ENCODE measurements at regions of chr12 and their contacts with region 1.

Region 1: GRCh38 chr12:108803428-108804105 is 53.8 kb downstream of the SSH1 start:
- DNase-seq: peak; percentile 88
- CTCF ChIP-seq: peak; percentile 79

Region 2: GRCh38 chr12:108562348-108563135 is 241.0 kb before region 1 on chr12 and contains the start of gene ISCU:
- CTCF ChIA-PET with region 1: interaction called, 56 read pairs
- POLR2A ChIA-PET with region 1: no interaction called
- DNase-seq: peak; percentile 98
- CTCF ChIP-seq: no peak

Region 3: DNA sequence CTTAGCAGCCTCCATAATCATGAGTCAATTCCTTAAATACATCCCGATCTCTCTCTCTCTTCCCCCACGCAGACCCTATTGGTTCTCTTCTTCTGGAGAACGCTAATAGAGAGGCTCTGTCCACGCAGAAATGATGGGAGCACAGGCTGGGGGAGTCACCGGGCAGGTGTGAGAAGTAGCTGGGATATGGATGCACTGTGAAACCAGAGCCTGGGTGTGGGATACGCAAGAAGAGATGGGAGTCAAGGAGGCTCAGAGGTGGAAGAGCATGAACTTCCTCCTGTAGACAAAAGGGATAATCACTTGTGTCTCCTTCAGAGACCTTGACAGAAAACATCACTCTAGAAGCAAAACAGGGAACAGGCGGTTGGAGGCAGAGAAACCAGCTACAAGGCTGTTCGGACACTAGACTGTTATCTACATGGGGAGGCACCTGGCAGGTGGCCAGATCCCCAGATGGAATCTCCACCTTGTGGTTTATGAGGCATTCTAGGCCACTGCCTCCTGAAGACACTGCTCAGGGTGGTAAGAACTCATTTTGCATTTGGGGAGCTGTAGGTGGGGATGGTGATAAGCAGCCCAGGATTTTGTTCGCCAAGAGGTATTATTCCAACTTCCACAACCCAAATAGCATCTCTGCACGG is 162.6 kb before region 1 on chr12:
- CTCF ChIA-PET with region 1: interaction called, 14 read pairs
- POLR2A ChIA-PET with region 1: no interaction called
- DNase-seq: no peak
- CTCF ChIP-seq: no peak

Region 4: GRCh38 chr12:108671110-108671509 is 132.5 kb before region 1 on chr12:
- CTCF ChIA-PET with region 1: interaction called, 257 read pairs
- POLR2A ChIA-PET with region 1: no interaction called
- DNase-seq: no peak
- CTCF ChIP-seq: no peak

Region 5: GRCh38 chr12:108816652-108817335 is 13.2 kb after region 1 on chr12:
- CTCF ChIA-PET with region 1: interaction called, 32 read pairs
- POLR2A ChIA-PET with region 1: interaction called, 3 read pairs
- DNase-seq: no peak
- CTCF ChIP-seq: no peak

Region 6: GRCh38 chr12:108939594-108939993 is 136.0 kb after region 1 on chr12:
- CTCF ChIA-PET with region 1: no interaction called
- POLR2A ChIA-PET with region 1: no interaction called
- DNase-seq: no peak
- CTCF ChIP-seq: no peak

Region 7: DNA sequence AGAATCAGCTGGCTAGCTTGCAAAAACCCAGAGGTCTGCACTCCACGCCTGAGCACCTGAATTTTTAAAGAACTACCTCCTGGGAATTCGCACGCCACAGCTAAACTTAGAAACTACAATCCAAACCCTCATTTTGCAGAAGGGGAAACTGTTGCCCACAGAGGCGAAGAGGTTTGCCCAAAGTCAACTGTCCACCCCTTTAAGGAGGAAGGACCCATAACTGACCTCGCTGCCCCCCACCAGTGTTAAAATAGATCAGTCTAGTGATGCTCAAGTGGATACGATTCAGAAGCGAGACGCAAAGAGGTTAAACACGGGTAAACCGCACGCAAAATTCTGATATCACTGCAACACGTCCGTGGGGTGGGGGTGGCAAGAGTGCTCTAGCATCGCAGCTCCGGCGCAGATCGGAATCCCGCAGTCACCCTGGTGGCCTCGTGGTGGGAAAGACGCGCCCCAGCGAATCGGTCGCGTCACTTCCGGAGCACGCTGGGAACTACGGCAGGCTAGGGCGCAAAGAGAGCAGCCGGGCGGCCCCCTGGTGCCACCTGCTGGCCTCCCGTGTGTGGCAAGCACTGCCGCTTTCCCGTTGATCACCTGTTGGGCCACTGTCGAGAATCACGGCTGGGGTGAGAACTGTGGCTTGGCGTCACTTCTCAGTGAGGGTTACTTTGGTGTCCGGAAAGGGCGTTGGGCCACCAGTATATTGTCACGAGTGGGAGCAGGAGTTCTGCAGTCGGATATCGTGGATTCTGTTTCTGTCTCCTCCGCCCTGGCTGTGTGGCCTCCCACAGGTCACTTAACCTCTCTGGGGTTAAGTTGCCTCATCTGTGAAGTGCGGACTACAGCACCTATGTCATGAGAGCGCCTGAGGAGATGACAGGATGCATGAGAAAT is 289.7 kb after region 1 on chr12 and contains the start of gene ALKBH2:
- CTCF ChIA-PET with region 1: interaction called, 11 read pairs
- POLR2A ChIA-PET with region 1: no interaction called
- DNase-seq: peak; percentile 92
- CTCF ChIP-seq: peak; percentile 99

Measured in GM10248 (cell line).